Posterior vena cava (tissue), 2 donors: ENCODE measurements at regions of chr4 and their contacts with region 1.

Region 1: DNA sequence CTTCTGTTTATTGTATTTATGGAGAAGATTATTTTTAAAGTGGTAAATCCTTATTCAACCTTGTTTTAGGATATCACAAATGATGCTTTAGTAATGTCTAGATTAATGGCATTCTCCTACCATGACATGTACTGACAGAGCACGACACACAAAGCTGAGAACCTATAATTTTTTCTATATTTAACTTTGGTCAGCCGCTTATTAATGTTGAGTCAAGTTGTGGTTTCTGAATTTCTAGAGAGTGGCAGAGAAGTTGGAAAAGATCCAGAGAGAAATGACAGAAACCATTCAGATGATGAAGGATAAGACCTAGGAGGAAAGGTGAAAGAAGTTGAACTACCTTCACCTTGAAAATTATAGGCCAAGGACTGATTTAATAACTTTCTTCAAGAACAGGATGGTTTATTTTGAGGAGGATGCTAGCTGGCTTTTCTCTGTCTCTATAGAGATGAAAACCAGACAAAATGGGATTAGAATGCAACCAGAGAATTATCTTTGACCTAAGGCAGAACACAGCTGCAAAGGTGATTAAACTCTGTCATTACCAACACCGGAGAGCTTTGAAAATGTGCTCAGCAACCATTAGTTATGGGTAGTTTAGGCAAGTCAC is 62.6 kb upstream of the TSPAN5 start:
- DNase-seq: no peak

Region 2: DNA sequence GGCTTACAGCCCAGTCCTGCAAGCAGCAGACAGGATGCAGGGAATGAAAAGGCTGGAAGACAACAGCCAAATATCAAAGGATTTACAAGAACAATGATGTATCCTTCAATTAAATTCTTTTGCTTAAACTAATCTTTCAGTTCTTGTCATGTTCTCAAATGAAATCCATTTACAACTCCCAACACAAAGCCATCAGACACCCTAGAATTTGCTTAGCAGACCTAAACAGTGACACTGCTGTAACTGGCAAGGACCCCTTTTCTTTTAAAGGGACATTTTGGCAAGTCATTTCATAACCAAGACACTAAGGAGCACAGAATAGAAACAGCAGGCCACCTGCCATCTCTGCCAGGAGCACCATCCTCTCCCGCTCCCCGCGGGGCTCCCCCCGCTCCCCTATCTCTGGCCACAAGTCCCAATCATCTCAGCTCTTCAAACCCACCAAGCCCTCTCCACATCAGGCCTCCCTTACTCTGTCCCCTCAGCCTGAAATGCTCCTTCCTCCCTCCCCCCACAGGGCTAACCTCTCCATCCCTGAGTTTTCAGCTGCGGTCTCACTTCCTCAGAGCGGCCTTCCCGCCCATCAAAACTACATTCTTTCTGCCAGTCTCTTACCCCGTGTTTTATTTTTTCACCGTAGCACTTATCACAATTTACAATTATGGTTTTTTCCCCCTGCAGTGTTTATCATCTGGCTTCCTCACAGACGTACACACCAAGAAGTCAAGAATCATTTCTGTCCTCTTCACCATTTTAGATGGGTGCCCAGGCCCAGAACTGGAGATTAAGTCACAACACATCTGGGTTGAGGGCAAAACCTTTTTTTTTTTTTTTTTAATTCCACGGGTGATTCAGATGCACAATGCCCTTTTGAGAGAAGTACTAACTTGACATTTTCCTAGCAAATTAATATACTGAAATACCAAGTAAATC is 108.4 kb before region 1 on chr4:
- intact Hi-C with region 1: no loop called
- DNase-seq: no peak

Region 3: DNA sequence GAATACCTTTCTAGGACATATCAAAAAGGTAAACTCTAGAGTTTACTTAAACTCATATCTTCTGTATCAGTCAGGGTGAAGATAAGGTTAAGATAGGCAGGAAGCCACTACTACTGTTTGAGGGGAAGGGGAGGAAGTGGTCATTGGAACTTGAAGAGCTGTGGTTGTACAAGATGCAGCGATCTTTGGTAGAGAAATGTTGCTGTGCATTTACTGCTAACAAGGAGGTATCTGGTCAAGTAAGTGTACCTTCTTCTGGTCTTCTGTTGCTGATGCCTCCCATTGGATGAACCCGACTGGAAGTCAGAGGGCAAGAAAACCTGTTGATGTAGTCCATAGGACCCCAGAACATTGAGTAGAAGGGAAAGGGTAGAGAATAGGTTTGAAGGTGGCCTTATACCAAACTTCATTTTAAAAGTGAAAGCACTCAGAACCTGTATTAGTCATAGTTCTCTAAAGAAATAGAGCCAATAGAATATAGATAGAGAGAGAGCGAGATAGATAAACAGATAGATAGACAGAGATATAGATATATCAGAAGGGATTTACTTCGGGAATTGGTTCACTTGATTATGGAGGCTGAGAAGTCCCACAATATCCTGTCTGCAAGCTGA is 14.7 kb before region 1 on chr4:
- intact Hi-C with region 1: loop called in 1 of 2 experiments (anchors 1 kb)
- DNase-seq: no peak

Region 4: DNA sequence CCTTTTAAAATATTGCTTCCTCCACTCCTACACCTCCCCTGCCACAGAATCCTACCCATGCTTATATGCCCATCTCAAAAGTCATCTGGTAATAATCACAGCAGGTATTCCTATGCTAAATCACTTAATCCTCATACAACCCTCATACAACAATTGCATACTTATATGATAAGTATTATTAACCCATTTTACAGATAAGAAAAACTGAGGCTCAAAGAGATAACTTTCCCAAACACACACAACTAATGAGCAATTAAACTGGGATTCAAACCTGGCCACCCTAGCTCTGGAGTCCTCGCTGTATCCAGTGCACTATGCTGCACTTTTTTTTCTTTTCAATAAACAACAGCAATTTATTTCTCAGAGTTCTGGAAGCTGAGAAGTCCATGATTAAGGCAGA is 37.2 kb after region 1 on chr4:
- intact Hi-C with region 1: no loop called
- DNase-seq: no peak